ENCODE measurements at regions of chr4 and their contacts with region 1.

Region 1: DNA sequence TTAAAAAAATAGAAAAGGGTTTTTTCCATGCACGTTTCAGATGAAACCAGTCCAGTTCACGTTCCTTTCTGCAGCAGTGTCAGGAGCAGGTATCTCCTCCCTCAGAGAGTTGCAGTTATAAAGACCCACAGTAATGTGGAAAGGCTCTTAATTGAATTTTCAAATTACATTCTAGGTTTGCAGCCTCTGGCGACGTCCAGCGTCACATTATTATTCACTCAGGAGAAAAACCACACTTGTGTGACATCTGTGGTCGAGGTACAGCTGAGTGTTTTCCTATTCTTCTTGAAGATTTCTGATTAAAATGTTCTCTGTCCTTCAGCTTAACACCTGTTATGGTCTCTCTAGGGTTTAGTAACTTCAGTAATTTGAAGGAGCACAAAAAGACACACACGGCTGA is 25.4 kb downstream of the ZBTB49 start:
- DNase-seq: no peak
- H3K4me3 ChIP-seq: peak overlapping the region; percentile 2
- H3K27ac ChIP-seq: peak overlapping the region; percentile 69
- H3K4me1 ChIP-seq: peaks cover 48% of the 10 kb centered on the region
- CTCF ChIP-seq: no peak

Region 2: DNA sequence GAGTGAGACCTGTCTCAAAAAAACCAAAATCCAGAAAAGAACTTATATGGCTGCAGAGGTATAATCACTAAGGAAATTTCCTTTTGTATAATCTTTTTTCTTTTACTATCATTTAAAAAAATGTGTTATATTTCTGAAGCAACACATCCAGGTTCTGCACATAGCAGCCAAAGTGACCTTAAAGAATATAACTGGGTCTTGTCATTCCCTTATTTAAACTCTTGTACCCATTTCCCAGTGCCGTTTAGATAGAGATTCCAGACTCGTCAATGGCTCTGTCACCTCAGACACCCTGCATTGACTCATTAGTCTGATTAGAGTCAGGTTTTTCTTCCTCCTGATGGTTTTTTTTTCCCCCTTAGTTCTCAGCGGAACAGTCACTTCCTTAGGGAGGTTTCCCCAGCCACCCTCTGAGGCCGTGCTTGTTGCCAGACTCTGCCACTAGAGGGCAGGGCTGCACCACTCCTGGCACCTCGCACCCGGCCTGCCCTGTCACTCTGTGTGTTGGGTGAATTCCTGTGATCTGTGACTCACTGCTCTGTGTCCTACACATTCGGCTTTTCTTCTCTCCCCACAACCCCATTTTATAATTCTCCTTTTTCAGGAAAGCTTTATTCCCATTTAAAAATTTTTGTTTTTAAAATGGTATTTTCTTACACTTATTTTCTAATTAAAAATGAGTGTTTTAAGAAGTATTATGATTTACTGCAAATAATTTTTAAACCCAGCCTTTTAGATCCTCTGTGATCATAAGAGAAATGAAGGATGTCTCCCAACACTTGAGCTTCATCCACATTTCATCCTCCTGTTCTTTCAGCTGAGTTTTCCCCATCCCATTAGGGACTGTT is 1208.9 kb before region 1 on chr4:
- CTCF ChIA-PET with region 1: no interaction called
- POLR2A ChIA-PET with region 1: no interaction called
- intact Hi-C with region 1: no loop called
- DNase-seq: peak; percentile 72
- H3K4me3 ChIP-seq: no peak overlapping the region
- H3K27ac ChIP-seq: no peak overlapping the region
- H3K4me1 ChIP-seq: no peaks in the 10 kb centered on the region
- CTCF ChIP-seq: peak; percentile 99

Region 3: GRCh38 chr4:4289941-4290850 is 25.3 kb before region 1 on chr4 and contains the starts of genes LYAR and ZBTB49:
- CTCF ChIA-PET with region 1: no interaction called
- POLR2A ChIA-PET with region 1: interaction called, 4 read pairs
- intact Hi-C with region 1: loop called (anchors 2 kb)
- DNase-seq: peak; percentile 92
- H3K4me3 ChIP-seq: peak within 1 kb of the TSS; percentile 78
- H3K27ac ChIP-seq: peak within 1 kb of the TSS; percentile 30
- H3K4me1 ChIP-seq: peaks cover 20% of the 10 kb centered on the region
- CTCF ChIP-seq: no peak
- total RNA-seq, gene LYAR: 58.8 and 86.8 TPM in 2 replicates
- total RNA-seq, gene ZBTB49: 6.5 and 9.9 TPM in 2 replicates

Measured in OCI-LY7 (cell line).